ENCODE measurements at regions of chr10 and their contacts with region 1.

Region 1: GRCh38 chr10:63629363-63630084 is 108.3 kb downstream of the REEP3 start:
- DNase-seq: peak; percentile 80 to 91 (median 89)
- H3K4me3 ChIP-seq: peak overlapping the region; percentile 62 to 92 (median 78)
- H3K27ac ChIP-seq: peak overlapping the region in 1 of 2 experiments; percentile 67
- H3K4me1 ChIP-seq: peaks cover 12 to 46% (median 33%) of the 10 kb centered on the region in 4 experiments
- H3K27me3 ChIP-seq: peaks cover 0 to 6% (median 4%) of the 10 kb centered on the region in 5 experiments

Region 2: DNA sequence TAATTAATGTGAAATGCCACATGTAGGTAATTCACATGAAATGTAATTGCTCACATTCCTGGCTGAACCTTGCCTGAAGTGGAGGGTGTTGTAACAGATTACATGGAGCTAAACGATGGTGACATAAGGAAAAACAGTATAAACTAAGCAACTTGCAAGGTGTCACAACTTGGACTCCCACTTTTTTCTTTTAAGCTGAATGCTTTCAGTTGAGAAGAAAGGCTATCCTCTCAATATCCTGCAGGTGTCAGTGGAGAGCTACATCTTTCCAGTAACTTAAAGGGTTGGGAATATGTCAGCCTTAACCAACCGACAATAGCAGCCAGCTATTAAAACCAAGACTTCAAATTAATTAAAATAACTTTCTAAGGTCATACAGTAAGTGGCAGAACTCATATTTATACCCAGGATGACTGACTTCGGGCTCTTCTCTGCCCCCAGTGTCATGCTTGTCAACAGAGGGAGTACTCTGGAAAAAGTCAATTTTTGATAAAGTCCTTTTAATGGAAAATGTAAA is 462.7 kb before region 1 on chr10:
- CTCF ChIA-PET with region 1: interaction called, 29 read pairs
- POLR2A ChIA-PET with region 1: interaction called, 4 read pairs
- DNase-seq: peak; percentile 76 to 90 (median 86)
- H3K4me3 ChIP-seq: no peak overlapping the region
- H3K27ac ChIP-seq: no peak overlapping the region
- H3K4me1 ChIP-seq: no peaks in the 10 kb centered on the region
- H3K27me3 ChIP-seq: no peaks in the 10 kb centered on the region

Region 3: GRCh38 chr10:63217120-63217605 is 412.4 kb before region 1 on chr10:
- CTCF ChIA-PET with region 1: interaction called, 69 read pairs
- POLR2A ChIA-PET with region 1: no interaction called
- DNase-seq: peak; percentile 67 to 71 (median 69)
- H3K4me3 ChIP-seq: no peak overlapping the region
- H3K27ac ChIP-seq: peak overlapping the region in 1 of 2 experiments; percentile 45
- H3K4me1 ChIP-seq: peaks cover 0 to 25% (median 7%) of the 10 kb centered on the region in 4 experiments
- H3K27me3 ChIP-seq: no peaks in the 10 kb centered on the region

Region 4: GRCh38 chr10:63256009-63256773 is 373.3 kb before region 1 on chr10:
- CTCF ChIA-PET with region 1: interaction called, 11 read pairs
- POLR2A ChIA-PET with region 1: no interaction called
- DNase-seq: peak; percentile 59 to 93 (median 88)
- H3K4me3 ChIP-seq: peak overlapping the region in 5 of 7 experiments; percentile 7 to 55 (median 42)
- H3K27ac ChIP-seq: peak overlapping the region; percentile 42 to 59
- H3K4me1 ChIP-seq: peaks cover 41 to 80% (median 63%) of the 10 kb centered on the region in 4 experiments
- H3K27me3 ChIP-seq: no peaks in the 10 kb centered on the region

Region 5: DNA sequence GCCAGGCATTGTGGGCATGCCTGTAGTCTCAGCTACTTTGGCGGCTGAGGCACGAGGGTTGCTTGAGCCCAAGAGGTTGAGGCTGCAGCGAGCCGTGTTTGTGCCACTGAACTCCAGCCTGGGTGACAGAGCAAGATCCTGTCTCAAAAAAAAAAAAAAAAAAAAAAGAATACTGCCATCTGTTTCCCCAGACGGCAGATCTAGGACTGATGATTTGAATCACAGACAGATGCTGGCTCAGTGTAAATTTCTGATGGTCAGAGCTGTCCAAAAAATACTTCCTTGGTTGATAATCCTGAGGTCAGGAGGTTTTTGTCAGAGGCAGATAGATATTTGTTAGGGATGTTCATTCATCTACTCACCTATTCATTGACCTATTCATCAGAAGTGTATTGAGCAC is 22.3 kb after region 1 on chr10:
- CTCF ChIA-PET with region 1: no interaction called
- POLR2A ChIA-PET with region 1: no interaction called
- DNase-seq: no peak
- H3K4me3 ChIP-seq: no peak overlapping the region
- H3K27ac ChIP-seq: no peak overlapping the region
- H3K4me1 ChIP-seq: no peaks in the 10 kb centered on the region
- H3K27me3 ChIP-seq: no peaks in the 10 kb centered on the region

Region 6: GRCh38 chr10:63666836-63667383 is 37.4 kb after region 1 on chr10:
- CTCF ChIA-PET with region 1: no interaction called
- POLR2A ChIA-PET with region 1: no interaction called
- DNase-seq: peak in 2 of 3 donors; percentile 4 to 15
- H3K4me3 ChIP-seq: no peak overlapping the region
- H3K27ac ChIP-seq: no peak overlapping the region
- H3K4me1 ChIP-seq: peaks cover 0 to 3% (median 0%) of the 10 kb centered on the region in 4 experiments
- H3K27me3 ChIP-seq: no peaks in the 10 kb centered on the region

Region 7: DNA sequence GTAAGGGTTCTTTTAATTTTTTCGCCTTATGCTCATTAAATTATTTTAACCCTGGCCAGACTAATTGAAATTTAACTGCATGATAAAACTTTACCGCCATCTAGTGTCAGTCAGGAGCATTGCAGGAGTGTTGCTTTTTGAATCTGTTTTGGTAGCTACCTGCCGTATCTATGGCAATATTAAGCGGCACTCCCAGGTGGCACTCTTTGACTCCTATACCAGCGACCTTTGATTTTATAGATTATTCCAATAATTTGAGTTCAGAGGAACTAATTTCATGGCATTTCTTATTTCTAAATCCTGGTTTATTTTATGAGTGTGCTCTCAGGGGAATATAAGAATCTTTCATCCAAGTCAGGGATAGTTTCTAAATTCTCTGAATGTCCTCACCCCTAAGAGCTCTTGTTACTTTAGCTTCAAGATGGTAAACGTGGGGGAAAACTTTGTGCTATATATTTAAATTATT is 90.6 kb after region 1 on chr10:
- CTCF ChIA-PET with region 1: interaction called, 48 read pairs
- POLR2A ChIA-PET with region 1: interaction called, 3 read pairs
- DNase-seq: peak; percentile 56 to 73 (median 69)
- H3K4me3 ChIP-seq: no peak overlapping the region
- H3K27ac ChIP-seq: no peak overlapping the region
- H3K4me1 ChIP-seq: peaks cover 0 to 6% (median 0%) of the 10 kb centered on the region in 4 experiments
- H3K27me3 ChIP-seq: peaks cover 0 to 4% (median 0%) of the 10 kb centered on the region in 5 experiments

Measured in common myeloid progenitor, CD34-positive (primary cell).